ENCODE measurements at regions of chr19 and their contacts with region 1.

Region 1: DNA sequence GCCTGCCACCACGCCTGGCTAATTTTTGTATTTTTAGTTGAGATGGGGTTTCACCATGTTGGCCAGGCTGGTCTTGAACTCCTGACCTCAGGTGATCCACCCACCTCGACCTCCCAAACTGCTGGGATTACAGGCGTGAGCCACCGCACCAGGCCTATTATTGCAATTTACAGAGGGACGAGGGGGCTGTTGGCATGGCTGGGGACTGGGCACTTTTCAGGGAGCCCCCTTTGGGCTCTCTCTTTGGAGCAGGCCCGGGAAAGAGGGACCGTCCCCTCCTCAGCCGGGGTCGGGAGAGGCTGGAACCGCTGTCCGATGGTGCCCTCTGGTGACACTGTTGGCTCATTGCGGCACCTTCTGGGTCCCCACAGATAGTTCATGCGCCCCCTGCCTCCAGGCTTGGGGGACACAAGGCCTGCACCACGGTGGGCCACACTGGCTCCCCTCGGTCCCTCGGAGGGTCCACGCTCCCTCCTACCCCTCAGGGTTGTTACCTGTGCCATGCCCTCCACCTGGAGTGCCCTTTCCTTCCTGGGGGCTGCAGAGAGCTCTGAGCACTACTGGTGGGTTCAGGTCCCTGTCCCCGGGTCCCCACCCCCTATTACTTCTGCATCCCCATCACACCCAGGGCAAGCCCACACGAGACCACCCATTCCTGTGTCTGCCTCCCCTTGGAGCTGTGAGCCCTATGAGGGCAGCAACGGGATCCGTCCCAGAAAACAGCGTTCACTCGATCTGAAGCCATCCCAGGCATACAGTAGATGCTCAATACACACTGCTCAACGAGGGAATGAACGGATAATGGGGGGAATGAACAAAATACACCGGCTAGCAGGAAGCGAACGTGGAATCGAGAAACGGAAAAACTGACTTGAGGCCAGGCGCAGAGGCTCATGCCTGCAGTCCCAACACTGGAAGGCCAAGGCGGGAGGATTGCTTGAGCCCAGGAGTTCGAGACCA is 12.5 kb downstream of the FEM1A start:
- DNase-seq: peak; percentile 58 to 87
- H3K4me3 ChIP-seq: no peak overlapping the region
- H3K4me1 ChIP-seq: no peaks in the 10 kb centered on the region
- H3K27me3 ChIP-seq: no peaks in the 10 kb centered on the region

Region 2: DNA sequence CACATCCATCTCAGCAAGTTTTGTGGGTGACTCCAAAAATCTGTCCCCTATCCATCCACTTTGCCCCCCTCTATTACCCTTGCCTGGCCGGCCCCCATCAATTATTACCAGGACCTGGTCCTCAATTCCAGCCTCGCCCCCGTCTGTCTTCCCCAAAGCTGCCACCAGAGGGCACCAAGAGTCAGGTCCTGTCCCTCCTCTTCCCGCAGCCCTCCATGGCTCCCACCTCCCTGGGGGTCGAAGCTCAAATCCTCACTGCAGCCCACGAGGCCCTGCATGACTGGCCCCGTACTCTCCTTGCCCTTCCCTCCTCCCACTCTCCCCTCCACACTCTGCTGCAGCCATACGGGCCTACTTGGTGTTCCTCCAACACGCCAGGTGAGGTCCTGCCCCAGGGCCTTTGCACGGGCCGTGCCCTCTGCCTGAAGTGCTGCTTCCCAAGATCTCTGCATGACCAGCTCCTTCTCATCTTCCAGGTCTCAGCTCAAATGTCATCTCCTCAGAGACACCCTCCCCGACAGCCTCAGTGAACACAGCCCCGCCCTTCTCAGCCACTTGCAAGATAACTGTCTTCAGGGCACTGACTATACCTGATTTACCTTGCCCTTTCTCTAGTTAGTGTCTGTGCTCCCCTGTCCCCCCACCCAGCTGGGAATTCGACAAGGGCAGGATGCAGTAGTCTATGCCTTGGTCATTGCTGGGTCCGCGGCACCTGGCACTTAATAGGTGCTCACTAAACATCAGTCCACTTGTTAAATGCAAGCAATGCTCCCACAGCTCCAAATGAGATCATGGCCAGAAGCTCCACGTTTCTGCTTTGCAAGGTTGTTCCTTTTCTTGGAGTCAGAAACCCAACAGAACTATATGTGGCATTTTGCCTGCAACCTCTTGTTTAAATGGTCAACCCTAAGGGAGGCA is 227.7 kb before region 1 on chr19:
- in situ Hi-C with region 1: loop called (anchors 10 kb)
- DNase-seq: peak in 1 of 2 experiments; percentile 90
- H3K4me3 ChIP-seq: no peak overlapping the region
- H3K4me1 ChIP-seq: peaks cover 11% of the 10 kb centered on the region
- H3K27me3 ChIP-seq: no peaks in the 10 kb centered on the region

Region 3: DNA sequence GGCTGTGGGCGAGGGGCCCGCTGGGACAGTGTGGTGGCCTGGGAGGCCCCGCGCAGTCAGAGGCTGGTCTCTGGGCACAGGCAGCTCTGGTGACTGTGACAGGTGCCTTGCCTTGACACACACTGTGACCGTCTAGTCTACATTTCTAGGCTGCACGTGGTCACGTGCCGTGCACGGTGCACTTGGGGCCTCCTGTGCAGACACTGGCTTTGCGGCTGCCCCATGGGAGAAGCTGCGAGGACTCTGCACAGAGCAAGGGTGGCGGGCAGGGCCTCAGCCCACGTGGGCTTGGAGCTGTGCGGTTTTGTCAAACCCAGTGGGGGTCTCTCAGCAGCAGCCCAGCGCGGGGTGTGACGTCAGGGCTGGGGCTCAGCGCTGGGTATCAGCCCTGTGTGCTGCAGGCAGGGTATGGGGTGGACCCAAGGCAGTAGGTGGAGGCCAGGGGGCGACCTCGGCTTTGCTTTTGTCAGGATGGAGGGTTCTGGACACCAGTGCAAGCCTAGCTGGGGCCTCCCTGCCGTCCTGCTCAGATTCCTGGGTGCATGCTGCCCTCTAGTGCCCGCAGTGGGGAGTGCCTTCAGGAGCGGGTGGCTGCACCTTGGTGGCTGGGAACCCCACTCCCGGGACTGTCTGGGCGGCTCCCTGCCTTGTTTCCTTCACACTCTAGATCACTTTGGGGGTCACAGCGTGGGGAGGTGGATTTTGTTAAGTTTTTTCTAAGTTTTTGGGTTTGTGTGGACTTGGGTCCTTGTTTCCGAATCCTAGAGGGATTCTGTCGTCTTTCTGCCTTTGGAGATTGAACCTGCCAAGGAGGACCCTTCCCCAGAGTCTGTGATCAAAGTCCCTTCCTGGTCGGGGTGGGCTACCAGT is 227.4 kb after region 1 on chr19:
- in situ Hi-C with region 1: loop called (anchors 5 kb)
- DNase-seq: peak; percentile 57 to 92
- H3K4me3 ChIP-seq: no peak overlapping the region
- H3K4me1 ChIP-seq: peaks cover 3% of the 10 kb centered on the region; the same call in 1 of the 2 replicates
- H3K27me3 ChIP-seq: no peaks in the 10 kb centered on the region